ENCODE measurements at regions of chr14 and their contacts with region 1.

Region 1: GRCh38 chr14:102316743-102317563 is 2.6 kb upstream of the ZNF839 start:
- DNase-seq: peak; percentile 89 to 99 (median 95)

Region 2: GRCh38 chr14:101964297-101965144 is 352.4 kb before region 1 on chr14 and contains the start of gene DYNC1H1:
- intact Hi-C with region 1: loop called (anchors 10 kb)
- DNase-seq: peak; percentile 85 to 99 (median 94)

Region 3: GRCh38 chr14:102046343-102047278 is 270.3 kb before region 1 on chr14:
- intact Hi-C with region 1: loop called (anchors 5 kb)
- DNase-seq: peak; percentile 55 to 96 (median 75)

Region 4: DNA sequence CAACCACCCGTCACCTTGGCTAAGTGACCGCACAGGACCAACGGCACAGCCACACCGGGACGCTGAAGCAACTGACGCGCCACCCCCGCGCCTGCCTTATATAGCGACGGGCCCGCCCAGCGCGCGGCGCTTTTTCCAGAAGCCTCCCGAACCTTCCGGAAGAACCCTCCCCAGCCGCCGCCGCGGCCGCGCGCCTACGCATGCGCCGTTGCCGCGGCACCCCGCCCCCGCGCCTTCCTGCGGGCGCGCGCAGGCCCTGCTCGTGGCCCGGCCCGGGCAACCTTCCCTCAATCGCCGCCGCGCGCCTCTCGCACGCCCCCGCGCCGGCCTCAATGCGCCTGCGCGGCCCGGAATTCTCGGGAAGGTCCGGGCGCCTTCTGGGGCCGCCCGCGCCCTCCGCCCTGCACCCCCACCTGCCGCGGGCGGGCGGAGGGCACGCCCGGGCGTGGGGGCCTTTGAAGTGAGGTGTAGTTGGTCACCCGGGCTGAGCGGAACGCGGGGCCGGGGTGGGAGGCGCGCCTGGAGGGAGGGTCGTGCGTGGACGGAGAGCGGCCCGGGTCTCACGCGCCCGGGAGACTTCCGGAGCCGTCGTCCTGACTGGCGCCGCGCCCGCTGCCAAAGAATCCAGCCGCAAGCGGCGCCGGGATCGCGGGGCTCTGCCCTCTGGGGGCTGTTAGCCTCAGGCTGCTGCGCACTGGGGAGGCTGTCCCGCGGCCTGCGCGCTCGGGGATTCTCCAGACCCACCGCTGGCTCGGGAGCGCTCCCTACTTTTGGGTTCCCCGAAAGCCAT is 229.8 kb before region 1 on chr14 and contains the start of gene HSP90AA1:
- intact Hi-C with region 1: loop called (anchors 10 kb)
- DNase-seq: peak; percentile 83 to 98 (median 91)

Region 5: DNA sequence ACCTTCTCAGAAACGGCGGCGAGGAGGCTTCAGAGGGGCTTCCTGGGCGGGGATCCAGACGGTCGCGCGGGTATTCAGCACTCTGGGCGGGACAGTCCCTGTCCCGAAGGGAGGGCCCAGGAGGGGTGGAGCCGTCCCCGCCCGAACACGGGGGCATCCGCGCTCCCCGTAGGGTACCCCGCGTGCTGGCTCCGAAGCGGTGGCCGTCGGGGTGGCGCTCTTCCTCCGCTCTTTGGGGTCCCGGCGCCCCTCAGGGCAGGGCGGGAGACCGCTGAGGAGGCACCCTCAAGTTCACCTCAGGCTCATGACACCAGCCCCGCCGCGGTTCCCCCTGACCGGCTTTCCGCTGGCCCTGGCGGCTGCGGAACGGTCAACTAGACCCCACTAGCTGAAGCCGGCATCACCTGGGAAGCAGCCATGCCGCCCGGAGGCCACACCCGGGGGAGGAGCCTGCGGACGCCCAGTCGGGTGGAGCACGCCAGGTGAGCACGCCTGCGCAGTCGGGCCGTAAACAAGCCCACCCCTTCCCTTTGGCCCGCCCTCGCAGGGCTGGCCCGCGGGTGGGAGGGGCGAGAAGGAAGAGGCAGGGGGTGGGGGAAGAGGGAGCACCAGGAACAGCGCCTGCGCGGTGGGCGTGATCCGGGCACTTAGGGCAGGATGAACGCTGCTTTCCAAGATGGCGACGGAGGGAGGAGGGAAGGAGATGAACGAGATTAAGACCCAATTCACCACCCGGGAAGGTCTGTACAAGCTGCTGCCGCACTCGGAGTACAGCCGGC is 177.5 kb before region 1 on chr14 and contains the start of gene WDR20:
- intact Hi-C with region 1: loop called (anchors 5 kb)
- DNase-seq: peak; percentile 97 to 100 (median 98)

Region 6: DNA sequence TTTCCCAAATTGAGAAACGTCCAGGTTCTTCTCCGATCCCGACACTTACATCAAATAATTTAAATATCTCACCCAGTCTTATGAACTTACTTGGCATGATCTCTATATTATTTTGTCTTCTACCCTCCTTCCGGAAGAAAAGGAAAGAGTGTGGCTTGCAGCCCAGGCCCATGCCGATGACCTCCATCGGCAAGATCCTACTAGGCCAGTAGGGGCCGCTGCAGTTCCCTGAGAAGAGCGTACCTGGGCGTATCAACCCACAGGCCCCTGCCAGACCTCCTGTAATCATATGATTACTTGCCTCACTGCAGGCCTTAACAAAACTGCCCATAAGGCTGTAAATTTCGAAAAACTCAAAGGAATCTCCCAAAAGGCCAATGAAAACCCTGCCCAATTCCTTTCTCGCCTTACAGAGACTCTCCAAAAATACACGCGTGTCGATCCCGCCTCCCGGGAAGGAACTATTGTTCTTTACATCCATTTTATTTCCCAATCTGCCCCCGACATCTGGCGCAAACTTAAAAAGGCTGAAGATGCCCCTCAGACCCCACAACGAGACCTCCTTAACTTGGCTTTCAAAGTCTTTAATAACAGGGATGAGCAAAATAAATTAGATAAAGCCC is 81.6 kb before region 1 on chr14:
- intact Hi-C with region 1: loop called (anchors 1 kb)
- DNase-seq: peak in 8 of 10 donors; percentile 30 to 95 (median 70)

Region 7: DNA sequence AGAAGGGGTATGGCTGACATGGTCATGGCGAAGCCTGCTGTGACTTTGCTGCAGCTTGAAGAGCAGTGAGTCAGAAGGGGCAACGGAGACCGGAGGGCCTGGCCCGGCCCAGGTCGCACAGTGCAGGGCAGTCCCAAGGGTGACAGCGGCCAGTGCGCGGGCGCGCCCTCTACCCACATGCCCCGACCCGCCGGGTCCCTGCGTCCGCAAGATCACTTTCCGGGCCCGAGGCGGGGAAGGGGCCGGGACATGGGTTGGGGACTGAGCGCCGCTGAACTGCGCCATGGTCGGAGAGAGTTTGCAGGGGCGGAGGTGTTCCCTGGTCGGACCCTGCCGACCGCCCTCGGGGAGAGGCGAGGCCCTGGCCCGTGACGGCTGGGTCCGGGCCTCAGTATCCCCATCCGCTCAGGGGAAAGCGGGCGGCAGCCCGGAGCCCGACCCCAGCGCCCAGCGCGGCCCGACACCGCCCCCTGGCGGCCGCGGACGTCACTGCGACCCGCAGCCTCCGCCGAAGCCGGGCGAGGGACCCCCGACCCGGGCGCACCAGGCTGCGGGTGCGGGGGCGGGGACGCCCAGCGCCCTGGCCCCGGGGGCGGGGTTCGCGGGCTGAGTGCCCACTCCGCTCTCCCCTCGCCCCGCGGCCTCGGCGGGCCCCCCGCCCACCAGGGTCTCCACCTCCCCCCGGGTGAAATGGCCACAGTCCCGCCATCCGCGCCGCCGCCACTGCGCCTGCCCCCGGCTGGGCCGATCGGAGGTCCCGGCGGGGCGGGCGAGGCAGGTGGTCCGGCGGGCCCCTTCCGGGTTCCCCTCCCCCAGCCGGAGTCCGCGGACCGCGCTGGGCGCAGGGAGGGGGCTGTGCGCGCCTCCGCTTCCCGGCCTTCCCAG is 199.8 kb after region 1 on chr14:
- intact Hi-C with region 1: loop called (anchors 5 kb)
- DNase-seq: peak in 7 of 10 donors; percentile 40 to 95 (median 66)

Measured in posterior cingulate gyrus (tissue), 11 donors.